GM10248 (cell line): ENCODE measurements at regions of chr9 and their contacts with region 1.

Region 1: GRCh38 chr9:26539867-26540493 is 352.6 kb downstream of the CAAP1 start:
- DNase-seq: no peak
- CTCF ChIP-seq: no peak

Region 2: GRCh38 chr9:26524267-26524666 is 15.7 kb before region 1 on chr9:
- CTCF ChIA-PET with region 1: interaction called, 12 read pairs
- POLR2A ChIA-PET with region 1: no interaction called
- DNase-seq: no peak
- CTCF ChIP-seq: no peak